ENCODE measurements at regions of chr15 and their contacts with region 1.

Region 1: DNA sequence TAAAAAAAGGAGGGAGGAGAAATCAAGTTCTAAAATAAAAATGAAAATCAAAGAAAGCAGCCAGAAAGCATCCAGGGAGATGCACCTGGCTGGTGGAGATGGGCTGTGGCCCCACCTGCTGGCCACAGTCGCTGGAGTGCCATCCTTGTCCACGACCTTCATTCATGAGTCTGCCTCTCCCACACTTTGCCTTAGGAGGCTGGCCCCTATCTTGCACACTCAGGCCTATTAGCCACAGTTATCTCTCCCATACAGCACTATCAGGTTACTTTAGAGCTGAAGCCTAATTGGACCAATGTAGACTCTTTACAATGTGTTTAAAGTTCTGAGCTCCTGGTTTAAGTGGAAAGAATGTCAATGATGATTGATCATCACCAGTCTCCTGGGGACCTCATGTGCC is 392.0 kb upstream of the RORA start:
- H3K4me3 ChIP-seq: no peak overlapping the region
- H3K27ac ChIP-seq: no peak overlapping the region
- H3K4me1 ChIP-seq: no peaks in the 10 kb centered on the region
- CTCF ChIP-seq: peak; percentile 33; the same call in 1 of the 2 replicates

Region 2: GRCh38 chr15:61195116-61196002 is 425.8 kb before region 1 on chr15:
- CTCF ChIA-PET with region 1: interaction called, 16 read pairs
- POLR2A ChIA-PET with region 1: no interaction called
- H3K4me3 ChIP-seq: no peak overlapping the region
- H3K27ac ChIP-seq: no peak overlapping the region
- H3K4me1 ChIP-seq: peaks cover 8% of the 10 kb centered on the region; the same call in 1 of the 2 replicates
- CTCF ChIP-seq: no peak; the same call in 1 of the 2 replicates

Region 3: GRCh38 chr15:61834076-61834697 is 213.0 kb after region 1 on chr15:
- CTCF ChIA-PET with region 1: interaction called, 13 read pairs
- POLR2A ChIA-PET with region 1: no interaction called
- H3K4me3 ChIP-seq: no peak overlapping the region
- H3K27ac ChIP-seq: no peak overlapping the region
- H3K4me1 ChIP-seq: no peaks in the 10 kb centered on the region
- CTCF ChIP-seq: peak; percentile 21; the same call in 1 of the 2 replicates